CD8-positive, alpha-beta memory T cell (primary cell): ENCODE measurements at regions of chr3 and their contacts with region 1.

Region 1: GRCh38 chr3:23916886-23917678 is at the starts of genes NKIRAS1 and RPL15:
- DNase-seq: peak; percentile 95 to 98 (median 97)
- H3K4me3 ChIP-seq: peak within 1 kb of the TSS; percentile 94
- H3K4me3 Mint-ChIP-seq: peak within 1 kb of the TSS; percentile 98 to 100 (median 99)
- H3K27ac ChIP-seq: peak within 1 kb of the TSS; percentile 88
- H3K27ac Mint-ChIP-seq: peak within 1 kb of the TSS; percentile 93 to 99 (median 98)
- H3K4me1 ChIP-seq: peaks cover 28% of the 10 kb centered on the region
- H3K4me1 Mint-ChIP-seq: peaks cover 41 to 70% (median 57%) of the 10 kb centered on the region in 3 donors
- H3K27me3 ChIP-seq: no peaks in the 10 kb centered on the region
- H3K27me3 Mint-ChIP-seq: peaks cover 0 to 5% of the 10 kb centered on the region in 2 donors
- total RNA-seq, gene NKIRAS1: 6.1 to 7.2 TPM
- total RNA-seq, gene RPL15: 2,200 to 2,237 TPM

Region 2: DNA sequence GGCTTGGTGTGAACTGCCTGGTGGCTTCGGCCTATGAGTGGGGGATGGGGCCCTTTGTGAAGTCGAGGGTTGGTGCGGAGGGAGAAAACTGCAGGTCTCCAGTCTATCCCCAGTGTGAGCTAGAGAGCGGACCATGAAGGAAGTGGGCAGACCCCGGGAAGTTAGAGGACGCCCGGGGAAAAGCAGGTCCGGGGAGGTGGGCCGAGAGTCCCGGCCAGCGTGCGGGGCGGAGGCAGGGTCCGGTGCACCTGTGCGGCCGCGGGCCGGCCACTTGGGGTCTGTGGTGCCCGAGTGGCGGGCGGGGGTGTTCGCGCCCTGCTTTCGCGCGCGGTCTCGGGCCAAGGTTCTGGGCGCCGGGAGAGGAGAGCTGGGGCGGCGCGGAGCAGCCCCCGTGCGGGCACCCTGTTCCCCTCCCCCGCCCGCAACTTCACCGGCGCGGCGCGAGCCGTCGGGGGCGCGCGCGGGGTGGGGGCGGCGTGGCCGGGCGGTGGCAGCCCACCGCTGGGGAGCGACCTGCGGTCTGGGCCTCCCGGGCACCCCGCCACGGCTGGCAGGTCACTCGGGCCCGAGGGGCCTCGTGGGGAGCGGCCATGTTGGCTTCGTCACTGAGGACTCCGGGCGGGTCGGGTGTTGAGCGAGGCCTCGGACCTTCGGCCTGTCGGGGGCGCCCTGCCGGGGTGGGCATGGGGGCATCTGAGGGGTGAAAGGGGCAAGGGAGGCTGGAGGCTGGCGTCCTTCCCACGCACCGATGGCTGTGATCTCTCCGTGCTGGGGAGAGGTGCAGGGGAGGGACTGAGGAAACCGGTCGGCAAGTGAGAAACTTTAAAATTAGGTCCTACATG is 106.5 kb before region 1 on chr3:
- CTCF ChIA-PET with region 1: no interaction called
- POLR2A ChIA-PET with region 1: interaction called, 13 read pairs
- DNase-seq: peak; percentile 13 to 57 (median 30)
- H3K4me3 ChIP-seq: peak overlapping the region; percentile 60
- H3K4me3 Mint-ChIP-seq: peak overlapping the region; percentile 96 to 99 (median 98)
- H3K27ac ChIP-seq: peak overlapping the region; percentile 24
- H3K27ac Mint-ChIP-seq: peak overlapping the region; percentile 93 to 99 (median 96)
- H3K4me1 ChIP-seq: peaks cover 45% of the 10 kb centered on the region
- H3K4me1 Mint-ChIP-seq: peaks cover 58 to 68% (median 67%) of the 10 kb centered on the region in 3 donors
- H3K27me3 ChIP-seq: no peaks in the 10 kb centered on the region
- H3K27me3 Mint-ChIP-seq: no peaks in the 10 kb centered on the region

Region 3: GRCh38 chr3:23938688-23939087 is 21.6 kb after region 1 on chr3:
- CTCF ChIA-PET with region 1: interaction called, 7 read pairs
- POLR2A ChIA-PET with region 1: interaction called, 32 read pairs
- DNase-seq: no peak
- H3K4me3 ChIP-seq: no peak overlapping the region
- H3K4me3 Mint-ChIP-seq: no peak overlapping the region
- H3K27ac ChIP-seq: no peak overlapping the region
- H3K27ac Mint-ChIP-seq: no peak overlapping the region
- H3K4me1 ChIP-seq: no peaks in the 10 kb centered on the region
- H3K4me1 Mint-ChIP-seq: peaks cover 2 to 3% (median 2%) of the 10 kb centered on the region in 3 donors
- H3K27me3 ChIP-seq: no peaks in the 10 kb centered on the region
- H3K27me3 Mint-ChIP-seq: peaks cover 5 to 8% of the 10 kb centered on the region in 2 donors

Region 4: DNA sequence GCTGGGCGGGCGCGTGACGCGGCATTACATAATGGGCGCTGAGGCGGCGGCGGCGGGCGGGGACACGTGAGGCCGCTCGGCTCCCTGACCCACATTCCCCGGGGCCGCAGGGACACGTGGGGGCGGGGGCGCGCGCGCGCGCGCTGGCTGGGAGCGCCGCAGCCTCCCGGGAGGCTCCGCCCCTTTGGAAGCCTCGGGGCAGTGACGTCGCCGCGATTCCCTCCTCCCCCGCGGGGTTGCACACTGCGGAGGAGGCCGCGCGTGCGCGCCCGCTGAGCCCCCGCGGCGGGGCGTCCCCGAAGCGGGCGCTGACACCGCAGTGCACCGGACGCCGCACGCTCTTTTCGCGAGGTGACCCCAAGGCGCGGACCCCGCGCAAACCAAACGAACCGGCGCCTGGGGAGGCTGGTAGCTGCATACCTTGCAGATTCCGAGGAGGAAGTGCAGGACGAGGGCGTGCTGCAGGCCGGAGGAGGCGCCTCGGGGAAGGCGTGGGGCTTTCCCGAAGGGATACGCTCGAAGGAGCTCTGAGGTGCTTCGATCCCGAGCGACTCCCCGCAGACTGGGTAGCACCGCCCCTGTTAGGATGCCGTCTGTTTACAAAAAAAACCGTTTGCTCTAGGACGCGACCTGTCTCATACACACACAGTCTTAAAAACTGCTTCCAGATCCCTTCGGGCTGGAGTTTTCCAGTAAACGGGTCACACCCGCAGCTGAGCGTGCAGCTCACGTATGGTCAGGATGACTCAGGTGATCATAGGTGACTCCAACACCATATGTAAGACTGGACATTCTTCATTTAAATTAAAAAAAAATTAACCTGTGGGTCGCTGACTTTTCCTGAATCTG is 29.0 kb after region 1 on chr3:
- CTCF ChIA-PET with region 1: interaction called, 7 read pairs
- POLR2A ChIA-PET with region 1: interaction called, 32 read pairs
- DNase-seq: peak; percentile 98 to 99 (median 98)
- H3K4me3 ChIP-seq: peak overlapping the region; percentile 91
- H3K4me3 Mint-ChIP-seq: peak overlapping the region; percentile 84 to 94 (median 89)
- H3K27ac ChIP-seq: peak overlapping the region; percentile 82
- H3K27ac Mint-ChIP-seq: peak overlapping the region; percentile 80 to 97 (median 95)
- H3K4me1 ChIP-seq: peaks cover 42% of the 10 kb centered on the region
- H3K4me1 Mint-ChIP-seq: peaks cover 50 to 61% (median 58%) of the 10 kb centered on the region in 3 donors
- H3K27me3 ChIP-seq: no peaks in the 10 kb centered on the region
- H3K27me3 Mint-ChIP-seq: no peaks in the 10 kb centered on the region